Activated CD4-positive, alpha-beta memory T cell treated with anti-CD3 and anti-CD28 coated beads for 36 hours (primary cell): ENCODE measurements at regions of chr16 and their contacts with region 1.

Region 1: DNA sequence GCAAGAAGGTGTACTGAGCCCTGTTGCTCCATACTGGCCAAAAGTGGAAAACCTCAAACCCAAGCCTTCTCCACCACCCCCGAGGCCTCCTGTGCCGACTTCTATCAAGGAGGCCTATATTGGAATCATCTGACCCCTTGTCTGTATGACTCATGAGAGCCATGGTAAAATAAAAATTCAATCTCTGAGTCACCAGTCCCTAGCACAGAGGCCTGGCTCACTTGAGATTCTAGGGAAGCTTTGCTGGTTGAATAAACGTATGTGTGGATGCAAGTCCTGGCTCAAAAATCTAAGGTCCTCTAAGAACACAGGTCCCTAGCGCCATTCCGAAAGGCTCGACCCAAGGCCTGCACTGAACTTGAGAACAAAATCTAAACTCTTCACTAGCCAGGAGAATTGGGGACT is 15.0 kb downstream of the NSMCE1 start:
- DNase-seq: no peak
- H3K4me3 Mint-ChIP-seq: peak overlapping the region; percentile 47
- H3K27ac Mint-ChIP-seq: peak overlapping the region; percentile 90
- H3K4me1 Mint-ChIP-seq: peaks cover 86% of the 10 kb centered on the region
- H3K27me3 Mint-ChIP-seq: no peaks in the 10 kb centered on the region

Region 2: DNA sequence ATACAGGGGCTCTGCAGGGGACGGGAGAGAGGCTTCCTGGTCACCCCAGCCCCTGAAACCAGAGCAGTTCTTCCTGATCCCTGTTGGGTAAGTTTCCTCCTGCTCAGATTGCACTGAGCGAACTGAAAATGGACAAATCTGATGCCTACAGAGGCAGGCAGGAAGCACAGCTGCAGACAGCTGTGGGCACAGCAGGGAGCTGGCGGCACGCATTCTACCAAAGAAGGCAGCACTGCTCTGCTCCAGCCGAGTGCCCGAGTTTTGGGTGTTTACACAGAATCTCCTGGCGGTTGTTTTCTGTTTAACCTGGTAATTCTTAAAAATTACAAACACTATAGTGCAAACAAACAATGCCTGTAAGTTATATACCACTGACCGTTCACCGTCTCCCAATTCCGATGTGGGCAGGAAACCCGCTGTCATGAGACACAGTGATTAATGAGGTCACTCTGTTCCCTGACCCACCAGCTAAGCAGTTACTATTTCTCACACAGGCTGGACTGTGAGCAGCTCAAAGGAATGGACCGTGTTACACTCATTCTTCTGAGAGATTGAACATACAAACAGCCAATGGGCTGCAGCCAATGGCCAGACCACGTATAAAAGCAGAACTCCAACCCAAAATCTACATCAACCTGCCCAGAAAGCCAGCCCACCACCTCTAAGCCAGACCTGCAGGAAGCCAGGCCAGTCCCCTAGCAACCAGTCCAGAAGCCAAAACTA is 10.5 kb before region 1 on chr16:
- CTCF ChIA-PET with region 1: no interaction called
- POLR2A ChIA-PET with region 1: interaction called, 5 read pairs
- intact Hi-C with region 1: loop called (anchors 1 kb)
- DNase-seq: peak; percentile 23
- H3K4me3 Mint-ChIP-seq: no peak overlapping the region
- H3K27ac Mint-ChIP-seq: no peak overlapping the region
- H3K4me1 Mint-ChIP-seq: peaks cover 80% of the 10 kb centered on the region
- H3K27me3 Mint-ChIP-seq: no peaks in the 10 kb centered on the region

Region 3: DNA sequence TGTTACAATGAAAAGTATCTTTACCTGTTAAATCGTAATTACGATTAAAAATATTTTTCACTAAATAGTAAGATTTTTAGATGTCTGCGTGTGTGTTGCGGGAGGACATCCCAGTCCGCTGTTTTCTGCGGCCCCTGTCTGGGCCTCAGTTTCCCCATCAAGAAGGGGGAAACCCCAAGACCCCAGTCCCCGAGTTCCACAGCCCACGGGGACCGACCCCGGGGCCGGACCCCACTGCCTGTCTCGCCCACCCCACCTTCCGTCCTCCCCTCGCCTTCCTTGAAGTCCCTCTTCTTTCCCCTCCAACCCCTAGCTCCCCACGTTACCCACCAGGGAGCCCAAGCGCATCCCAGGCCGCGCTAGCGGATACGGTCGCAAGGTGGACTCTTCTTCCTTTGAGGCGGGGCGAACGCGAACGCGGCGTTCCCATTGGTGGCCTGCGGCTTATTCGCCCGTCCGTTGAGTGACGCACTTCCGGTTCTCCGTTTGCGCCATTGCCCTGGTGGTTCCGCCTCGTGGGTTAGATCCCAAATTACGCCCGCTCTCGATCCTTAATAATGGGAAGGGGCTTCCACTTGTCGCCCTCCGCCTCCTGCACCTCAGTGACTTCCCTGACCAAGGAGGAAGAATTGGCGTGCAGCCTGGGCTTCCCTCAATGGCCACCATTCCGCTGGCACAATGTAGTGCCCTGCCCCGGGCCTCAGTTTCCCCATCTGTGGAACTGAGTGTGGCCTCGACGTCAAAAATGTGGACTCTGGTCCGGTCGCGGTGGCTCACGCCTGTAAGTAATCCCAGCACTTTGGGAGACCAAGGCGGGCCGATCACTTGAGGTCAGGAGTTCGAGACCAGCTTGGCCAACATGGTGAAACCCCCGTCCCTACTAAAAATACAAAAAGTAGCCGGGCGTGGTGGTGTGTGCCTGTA is 15.1 kb after region 1 on chr16 and contains the start of gene NSMCE1:
- CTCF ChIA-PET with region 1: interaction called, 5 read pairs
- POLR2A ChIA-PET with region 1: interaction called, 5 read pairs
- intact Hi-C with region 1: loop called (anchors 2 kb)
- DNase-seq: peak; percentile 98
- H3K4me3 Mint-ChIP-seq: peak within 1 kb of the TSS; percentile 89
- H3K27ac Mint-ChIP-seq: peak within 1 kb of the TSS; percentile 92
- H3K4me1 Mint-ChIP-seq: peaks cover 64% of the 10 kb centered on the region
- H3K27me3 Mint-ChIP-seq: no peaks in the 10 kb centered on the region
- total RNA-seq, gene NSMCE1: 120 to 121 TPM